ENCODE measurements at regions of chr1 and their contacts with region 1.

Region 1: GRCh38 chr1:227245613-227246320 is 72.5 kb downstream of the CDC42BPA start:
- DNase-seq: no peak
- ATAC-seq: peak; percentile 86

Region 2: GRCh38 chr1:226912587-226913176 is 333.1 kb before region 1 on chr1:
- intact Hi-C with region 1: loop called (anchors 10 kb)
- DNase-seq: no peak
- ATAC-seq: peak; percentile 77

Region 3: DNA sequence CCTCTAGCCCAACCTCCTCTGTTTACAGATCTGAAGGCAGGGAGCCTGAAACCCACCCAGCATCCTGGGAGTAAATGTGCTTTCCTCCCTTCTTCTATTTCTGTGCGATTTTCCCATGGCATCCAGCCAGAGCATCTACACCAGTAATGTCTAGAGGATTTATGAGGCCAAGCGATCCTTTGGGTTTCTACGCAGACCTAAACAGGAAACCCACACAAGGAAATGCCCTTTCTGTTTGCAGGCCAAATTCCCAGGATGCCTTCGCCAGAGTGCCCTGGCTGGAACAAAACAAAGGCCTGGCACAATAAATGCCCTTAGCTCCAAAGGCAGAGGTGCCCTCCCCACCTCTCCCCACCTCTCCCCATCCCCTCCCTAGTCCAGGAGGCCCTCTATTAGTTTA is 183.0 kb after region 1 on chr1:
- intact Hi-C with region 1: loop called (anchors 5 kb)
- DNase-seq: no peak
- ATAC-seq: peak; percentile 43